GM12878 (cell line): ENCODE measurements at regions of chr2 and their contacts with region 1.

Region 1: GRCh38 chr2:31255911-31256571 is 22.1 kb downstream of the EHD3 start:
- DNase-seq: peak; percentile 72
- ATAC-seq: peak; percentile 60
- H3K4me3 ChIP-seq: no peak overlapping the region
- H3K27ac ChIP-seq: peak overlapping the region; percentile 27
- H3K4me1 ChIP-seq: peaks cover 77% of the 10 kb centered on the region
- H3K27me3 ChIP-seq: no peaks in the 10 kb centered on the region
- CTCF ChIP-seq: no peak
- EP300 ChIP-seq: peak in 1 of 2 experiments; percentile 76; a peak in 2 of 4 replicates
- POLR2A ChIP-seq: no peak
- RAD21 ChIP-seq: no peak

Region 2: GRCh38 chr2:30947686-30948085 is 308.4 kb before region 1 on chr2:
- CTCF ChIA-PET with region 1: no interaction called
- POLR2A ChIA-PET with region 1: no interaction called
- RAD21 ChIA-PET with region 1: no interaction called
- SMC1A ChIA-PET with region 1: no interaction called
- in situ Hi-C with region 1: no loop called
- intact Hi-C with region 1: no loop called
- DNase-seq: no peak
- ATAC-seq: no peak
- H3K4me3 ChIP-seq: no peak overlapping the region
- H3K27ac ChIP-seq: no peak overlapping the region
- H3K4me1 ChIP-seq: no peaks in the 10 kb centered on the region
- H3K27me3 ChIP-seq: no peaks in the 10 kb centered on the region
- CTCF ChIP-seq: no peak
- EP300 ChIP-seq: no peak
- POLR2A ChIP-seq: no peak
- RAD21 ChIP-seq: no peak

Region 3: DNA sequence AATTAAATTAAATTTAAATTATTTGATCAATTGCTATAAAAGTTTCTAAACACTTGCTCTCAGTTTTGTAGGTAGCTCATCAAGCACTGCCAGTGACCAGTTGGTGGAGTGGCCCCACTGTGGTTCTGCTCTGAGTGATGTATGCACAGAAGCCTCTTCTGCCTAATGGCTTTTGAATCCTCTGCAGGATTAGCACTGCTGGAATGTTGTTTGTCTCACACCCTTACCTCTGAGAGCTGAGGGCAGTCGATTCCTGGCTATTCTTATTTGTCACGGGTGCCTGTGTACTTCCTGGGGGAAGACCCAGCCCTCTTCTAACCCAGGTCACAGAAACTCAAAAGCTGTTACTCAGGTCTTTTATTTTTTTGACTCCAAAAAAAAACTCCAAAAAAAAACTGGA is 48.3 kb before region 1 on chr2:
- CTCF ChIA-PET with region 1: interaction called, 5 read pairs
- POLR2A ChIA-PET with region 1: interaction called, 3 read pairs
- RAD21 ChIA-PET with region 1: interaction called, 5 read pairs
- SMC1A ChIA-PET with region 1: interaction called, 11 read pairs
- in situ Hi-C with region 1: no loop called
- intact Hi-C with region 1: no loop called
- DNase-seq: no peak
- ATAC-seq: peak; percentile 83
- H3K4me3 ChIP-seq: no peak overlapping the region
- H3K27ac ChIP-seq: no peak overlapping the region
- H3K4me1 ChIP-seq: peaks cover 4% of the 10 kb centered on the region; the same call in 1 of the 2 replicates
- H3K27me3 ChIP-seq: no peaks in the 10 kb centered on the region
- CTCF ChIP-seq: peak in 1 of 3 experiments; percentile 16; a peak in 2 of 6 replicates
- EP300 ChIP-seq: no peak
- POLR2A ChIP-seq: no peak
- RAD21 ChIP-seq: no peak

Region 4: DNA sequence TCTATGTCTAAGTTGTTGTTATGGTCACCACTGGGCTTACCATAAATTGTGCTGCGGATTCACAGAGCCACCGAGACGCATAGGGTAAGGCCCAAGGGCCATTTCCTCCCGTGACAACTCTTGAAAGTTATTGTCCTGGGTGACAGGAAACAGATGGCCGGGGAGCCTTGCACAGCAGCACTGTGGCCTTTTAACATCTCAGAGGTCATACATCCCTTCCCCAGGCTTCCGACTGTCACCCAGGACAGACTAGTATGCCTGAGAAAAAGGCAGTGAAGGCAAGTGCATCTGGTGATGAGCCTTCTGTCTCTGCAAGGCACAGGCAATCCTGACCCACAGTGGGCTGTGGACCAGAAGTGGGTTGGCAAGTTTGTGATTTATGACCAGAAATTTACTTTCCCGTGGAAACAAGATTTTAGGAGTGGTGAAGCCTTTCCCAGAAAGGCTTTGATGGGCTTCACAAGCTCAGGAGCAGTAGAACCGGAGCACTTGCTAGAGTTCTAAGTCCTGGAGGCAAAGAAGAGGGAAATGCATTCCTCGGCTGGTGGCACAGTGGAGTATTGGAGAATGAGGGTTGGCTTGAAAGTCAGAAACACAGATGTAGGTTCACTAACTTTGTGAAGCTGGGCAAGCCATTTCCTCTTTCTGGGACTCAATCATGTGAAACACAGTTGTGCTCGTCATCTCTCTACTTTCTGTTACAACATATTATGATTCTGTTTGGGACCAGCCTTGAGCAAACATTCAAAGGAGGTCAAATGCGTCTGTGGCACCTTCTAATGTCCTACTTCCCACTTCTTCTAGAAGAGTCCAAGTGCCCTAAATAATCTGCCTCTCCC is 36.7 kb before region 1 on chr2:
- CTCF ChIA-PET with region 1: interaction called, 4 read pairs
- POLR2A ChIA-PET with region 1: interaction called, 7 read pairs
- RAD21 ChIA-PET with region 1: interaction called, 12 read pairs
- SMC1A ChIA-PET with region 1: interaction called, 8 read pairs
- in situ Hi-C with region 1: no loop called
- intact Hi-C with region 1: loop called (anchors 1 kb)
- DNase-seq: peak; percentile 79
- ATAC-seq: peak; percentile 80
- H3K4me3 ChIP-seq: 0 out of 2 replicates have a peak overlapping the region, but pooled peaks have one; percentile 2
- H3K27ac ChIP-seq: peak overlapping the region; percentile 52
- H3K4me1 ChIP-seq: peaks cover 50% of the 10 kb centered on the region
- H3K27me3 ChIP-seq: no peaks in the 10 kb centered on the region
- CTCF ChIP-seq: no peak
- EP300 ChIP-seq: peak; percentile 28 to 48; a peak in 3 of 4 replicates
- POLR2A ChIP-seq: no peak
- RAD21 ChIP-seq: no peak

Region 5: GRCh38 chr2:31233741-31234682 is 22.0 kb before region 1 on chr2 and contains the start of gene EHD3:
- CTCF ChIA-PET with region 1: interaction called, 68 read pairs
- POLR2A ChIA-PET with region 1: interaction called, 5 read pairs
- RAD21 ChIA-PET with region 1: interaction called, 35 read pairs
- SMC1A ChIA-PET with region 1: interaction called, 30 read pairs
- in situ Hi-C with region 1: no loop called
- intact Hi-C with region 1: loop called (anchors 2 kb)
- DNase-seq: no peak
- ATAC-seq: peak; percentile 99
- H3K4me3 ChIP-seq: peak within 1 kb of the TSS; percentile 48
- H3K27ac ChIP-seq: no peak within 1 kb of the TSS
- H3K4me1 ChIP-seq: no peaks in the 10 kb centered on the region; the same call in 1 of the 2 replicates
- H3K27me3 ChIP-seq: no peaks in the 10 kb centered on the region
- CTCF ChIP-seq: peak; percentile 32 to 61 (median 59); a peak in 5 of 6 replicates
- EP300 ChIP-seq: no peak
- POLR2A ChIP-seq: peak; percentile 54; the same call in 1 of the 2 replicates
- RAD21 ChIP-seq: peak; percentile 48; the same call in 1 of the 2 replicates
- polyA plus RNA-seq, gene EHD3: 1.1 to 1.5 TPM

Region 6: DNA sequence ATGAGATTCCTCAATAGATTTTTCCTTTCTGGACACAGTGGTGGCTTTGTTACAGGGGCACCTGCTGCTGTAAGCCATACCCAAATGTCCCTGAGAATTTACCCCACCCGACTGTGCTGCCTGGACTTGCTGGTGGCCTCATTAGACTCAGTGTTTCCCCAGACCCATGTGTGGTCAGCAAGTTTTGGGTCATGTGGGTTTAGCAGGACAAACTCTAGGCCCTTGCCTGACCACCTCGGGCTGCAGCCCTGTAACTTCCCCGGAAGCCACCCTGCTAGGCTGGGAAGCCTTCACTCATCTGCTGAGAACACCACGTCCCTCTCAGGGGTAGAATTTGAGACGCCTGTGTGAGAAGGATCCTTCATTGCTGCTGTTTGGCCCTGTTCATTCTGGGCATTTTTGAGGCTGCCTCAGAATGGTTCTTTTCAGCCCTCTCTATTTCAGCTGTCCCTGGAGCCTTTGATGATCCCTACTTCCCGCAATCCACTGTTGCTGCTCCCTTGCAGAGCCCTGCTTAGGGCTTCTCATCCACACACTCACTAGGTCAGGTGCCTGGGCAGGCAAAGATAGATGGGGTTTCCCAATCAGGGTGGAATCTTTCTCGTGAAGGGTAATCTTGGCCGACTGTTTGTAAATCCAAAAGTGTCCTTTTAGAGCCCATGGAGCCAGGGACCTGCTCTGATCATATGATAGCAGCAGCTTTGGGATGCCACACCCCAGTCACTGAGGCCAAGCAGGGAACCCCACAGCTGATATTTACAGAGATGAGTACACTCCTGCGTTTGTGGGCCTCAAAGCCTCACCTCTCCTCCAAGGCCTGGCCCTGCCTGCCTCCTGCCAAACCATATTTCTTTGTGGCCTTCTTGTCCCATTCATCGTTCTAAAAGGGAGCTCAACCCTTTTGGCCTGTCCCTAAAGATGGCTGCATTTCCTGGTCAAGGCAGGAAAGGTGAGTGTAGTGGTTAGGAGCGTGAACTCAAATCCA is 15.4 kb before region 1 on chr2:
- CTCF ChIA-PET with region 1: interaction called, 68 read pairs
- POLR2A ChIA-PET with region 1: interaction called, 7 read pairs
- RAD21 ChIA-PET with region 1: interaction called, 35 read pairs
- SMC1A ChIA-PET with region 1: interaction called, 30 read pairs
- in situ Hi-C with region 1: no loop called
- intact Hi-C with region 1: loop called (anchors 2 kb)
- DNase-seq: no peak
- ATAC-seq: peak; percentile 37
- H3K4me3 ChIP-seq: no peak overlapping the region
- H3K27ac ChIP-seq: no peak overlapping the region
- H3K4me1 ChIP-seq: peaks cover 8% of the 10 kb centered on the region
- H3K27me3 ChIP-seq: no peaks in the 10 kb centered on the region
- CTCF ChIP-seq: no peak
- EP300 ChIP-seq: no peak
- POLR2A ChIP-seq: no peak
- RAD21 ChIP-seq: no peak

Region 7: DNA sequence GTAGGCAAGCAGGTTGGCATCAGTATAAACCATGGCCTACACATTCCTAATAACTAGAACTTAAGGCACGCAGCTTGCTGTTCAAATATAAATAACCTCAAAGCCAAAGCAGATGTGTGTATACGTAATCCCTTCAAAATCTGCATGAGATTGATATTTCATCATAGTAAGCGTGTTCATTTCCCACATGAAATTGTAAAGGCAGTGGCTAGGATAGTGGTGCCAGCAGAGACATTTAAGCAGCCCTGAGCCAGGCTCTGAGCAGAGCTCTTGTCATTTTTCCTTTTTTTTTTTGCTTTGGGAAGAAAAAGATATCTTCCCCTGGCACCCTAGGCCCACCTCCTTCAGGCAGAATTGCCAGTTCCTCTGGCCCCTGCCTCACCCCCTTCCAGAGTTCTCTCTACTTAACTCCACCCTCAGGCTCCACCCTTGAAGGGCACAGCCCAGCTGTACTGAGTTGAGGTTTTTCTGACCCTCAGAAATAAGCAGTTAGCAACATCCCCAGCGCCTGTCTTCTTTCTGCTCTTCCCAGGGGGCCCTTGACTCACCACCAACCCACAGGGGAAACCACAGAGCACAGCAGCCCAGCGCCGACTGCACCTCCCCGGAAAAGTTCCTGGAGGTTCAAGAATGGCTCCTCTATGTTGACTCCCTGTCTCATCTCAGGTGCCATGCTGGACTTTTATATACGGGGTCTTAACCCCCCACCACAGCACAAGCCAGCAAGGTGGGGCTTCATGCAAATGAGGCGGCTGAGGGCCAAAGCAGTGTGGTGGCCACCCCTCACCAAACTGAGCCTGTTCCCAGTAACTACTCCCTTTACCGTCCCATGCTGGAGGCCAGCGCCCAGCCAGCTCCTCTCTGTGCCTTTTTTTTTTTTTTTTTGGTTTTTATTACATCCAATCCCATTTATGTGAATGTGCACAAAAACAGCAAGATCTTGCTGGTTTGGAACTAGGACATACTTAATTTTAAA is 62.6 kb after region 1 on chr2:
- CTCF ChIA-PET with region 1: interaction called, 8 read pairs
- POLR2A ChIA-PET with region 1: no interaction called
- RAD21 ChIA-PET with region 1: interaction called, 12 read pairs
- SMC1A ChIA-PET with region 1: interaction called, 6 read pairs
- in situ Hi-C with region 1: no loop called
- intact Hi-C with region 1: loop called (anchors 2 kb)
- DNase-seq: peak; percentile 30
- ATAC-seq: peak; percentile 92
- H3K4me3 ChIP-seq: no peak overlapping the region
- H3K27ac ChIP-seq: no peak overlapping the region
- H3K4me1 ChIP-seq: peaks cover 18% of the 10 kb centered on the region
- H3K27me3 ChIP-seq: no peaks in the 10 kb centered on the region; a peak in 1 of 4 replicates
- CTCF ChIP-seq: no peak
- EP300 ChIP-seq: no peak
- POLR2A ChIP-seq: no peak
- RAD21 ChIP-seq: no peak

Region 8: GRCh38 chr2:31372097-31372496 is 116.1 kb after region 1 on chr2:
- CTCF ChIA-PET with region 1: no interaction called
- POLR2A ChIA-PET with region 1: no interaction called
- RAD21 ChIA-PET with region 1: no interaction called
- SMC1A ChIA-PET with region 1: no interaction called
- in situ Hi-C with region 1: no loop called
- intact Hi-C with region 1: no loop called
- DNase-seq: no peak
- ATAC-seq: no peak
- H3K4me3 ChIP-seq: no peak overlapping the region
- H3K27ac ChIP-seq: no peak overlapping the region
- H3K4me1 ChIP-seq: no peaks in the 10 kb centered on the region
- H3K27me3 ChIP-seq: peaks cover 0 to 3% of the 10 kb centered on the region in 2 experiments; a peak in 2 of 4 replicates
- CTCF ChIP-seq: no peak
- EP300 ChIP-seq: no peak
- POLR2A ChIP-seq: no peak
- RAD21 ChIP-seq: no peak

Region 9: DNA sequence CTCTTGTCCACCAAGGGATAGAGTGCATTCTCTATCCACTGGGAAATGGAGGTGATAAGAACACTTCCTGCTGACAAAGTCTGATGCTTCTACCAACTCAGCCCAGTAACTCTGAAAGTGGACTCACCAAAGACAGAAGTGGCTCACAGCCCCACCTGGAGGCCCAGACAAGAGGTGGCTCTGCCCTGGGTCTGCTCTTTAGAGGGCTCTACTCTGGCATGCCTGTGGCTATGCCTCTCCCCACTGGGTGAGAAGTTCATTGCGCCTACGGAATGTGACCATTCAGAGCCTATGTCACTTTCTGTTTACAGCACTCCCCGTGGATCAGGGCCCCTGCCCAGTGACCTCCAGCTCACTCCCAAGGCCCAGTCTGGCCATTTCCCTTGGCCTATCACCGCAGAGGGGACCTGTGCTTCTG is 172.0 kb after region 1 on chr2:
- CTCF ChIA-PET with region 1: no interaction called
- POLR2A ChIA-PET with region 1: no interaction called
- RAD21 ChIA-PET with region 1: no interaction called
- SMC1A ChIA-PET with region 1: no interaction called
- in situ Hi-C with region 1: no loop called
- intact Hi-C with region 1: no loop called
- DNase-seq: no peak
- ATAC-seq: peak; percentile 42; the same call in 1 of the 3 replicates
- H3K4me3 ChIP-seq: no peak overlapping the region
- H3K27ac ChIP-seq: no peak overlapping the region
- H3K4me1 ChIP-seq: no peaks in the 10 kb centered on the region
- H3K27me3 ChIP-seq: no peaks in the 10 kb centered on the region
- CTCF ChIP-seq: no peak
- EP300 ChIP-seq: no peak
- POLR2A ChIP-seq: no peak
- RAD21 ChIP-seq: no peak

Region 10: GRCh38 chr2:31547485-31547884 is 291.4 kb after region 1 on chr2:
- CTCF ChIA-PET with region 1: no interaction called
- POLR2A ChIA-PET with region 1: no interaction called
- RAD21 ChIA-PET with region 1: no interaction called
- SMC1A ChIA-PET with region 1: no interaction called
- in situ Hi-C with region 1: no loop called
- intact Hi-C with region 1: no loop called
- DNase-seq: no peak
- ATAC-seq: no peak
- H3K4me3 ChIP-seq: no peak overlapping the region
- H3K27ac ChIP-seq: no peak overlapping the region
- H3K4me1 ChIP-seq: no peaks in the 10 kb centered on the region
- H3K27me3 ChIP-seq: no peaks in the 10 kb centered on the region
- CTCF ChIP-seq: no peak
- EP300 ChIP-seq: no peak
- POLR2A ChIP-seq: no peak
- RAD21 ChIP-seq: no peak